ENCODE measurements at regions of chr4 and their contacts with region 1.

Region 1: DNA sequence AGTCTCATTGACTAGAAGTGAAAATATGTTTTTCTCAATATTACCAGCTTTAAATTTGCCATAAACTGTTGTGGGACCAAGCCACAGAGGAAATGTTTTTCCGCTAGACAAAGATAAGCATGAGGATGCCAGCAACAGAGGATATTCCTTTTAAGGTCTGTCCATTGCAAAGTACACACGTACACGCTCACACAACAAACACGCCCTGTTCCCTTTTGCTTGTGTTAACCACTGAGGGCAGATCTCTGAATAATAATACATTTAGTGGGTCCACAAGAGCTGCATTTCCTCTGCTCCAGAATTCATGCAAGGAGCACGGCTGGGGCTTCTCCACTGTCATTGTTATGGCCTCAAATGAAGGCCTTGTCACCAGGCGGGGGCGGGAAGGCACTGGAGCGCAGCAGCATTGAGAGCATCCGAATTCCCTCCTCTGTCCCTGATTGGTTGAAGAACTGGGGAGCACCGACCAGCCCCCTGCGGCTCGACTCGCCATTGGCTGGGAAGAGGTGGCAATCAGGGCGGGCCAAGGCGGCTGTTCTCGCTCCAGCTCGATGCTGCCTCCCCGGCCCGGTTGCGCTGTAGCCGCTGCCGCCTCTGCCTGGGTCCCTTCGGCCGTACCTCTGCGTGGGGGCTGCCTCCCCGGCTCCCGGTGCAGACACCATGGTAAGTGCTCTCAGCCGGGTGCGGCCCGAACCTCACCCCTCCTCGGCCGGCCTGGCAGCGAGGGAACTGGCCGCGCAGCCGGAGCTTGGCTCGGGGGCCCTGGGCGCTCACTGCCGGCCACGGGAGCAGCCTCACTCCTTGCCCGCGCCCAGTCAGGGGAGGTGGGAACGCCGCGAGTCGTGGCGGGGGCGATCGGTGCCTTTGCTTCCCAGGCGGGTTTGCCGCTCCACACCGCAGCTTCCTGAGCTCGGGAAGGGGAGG is at the start of gene GUCY1B1:
- DNase-seq: peak; percentile 98
- H3K4me3 ChIP-seq: peak within 1 kb of the TSS; percentile 64 to 67
- H3K27ac ChIP-seq: peak within 1 kb of the TSS in 1 of 2 experiments; percentile 72; a peak in 2 of 4 replicates
- H3K4me1 ChIP-seq: peaks cover 0 to 3% of the 10 kb centered on the region in 2 experiments; a peak in 1 of 4 replicates
- H3K27me3 ChIP-seq: no peaks in the 10 kb centered on the region
- CTCF ChIP-seq: peak; percentile 43
- EP300 ChIP-seq: no peak
- RAD21 ChIP-seq: peak; percentile 33
- polyA plus RNA-seq, gene GUCY1B1: 0.36 and 0.38 TPM in 2 replicates

Region 2: GRCh38 chr4:155769090-155769489 is 10.3 kb after region 1 on chr4:
- CTCF ChIA-PET with region 1: interaction called, 15 read pairs
- POLR2A ChIA-PET with region 1: no interaction called
- DNase-seq: no peak
- H3K4me3 ChIP-seq: no peak overlapping the region
- H3K27ac ChIP-seq: no peak overlapping the region
- H3K4me1 ChIP-seq: no peaks in the 10 kb centered on the region
- H3K27me3 ChIP-seq: no peaks in the 10 kb centered on the region
- CTCF ChIP-seq: no peak
- EP300 ChIP-seq: no peak
- RAD21 ChIP-seq: no peak

Region 3: GRCh38 chr4:155866177-155866576 is 107.4 kb after region 1 on chr4 and contains the start of gene ASIC5:
- CTCF ChIA-PET with region 1: no interaction called
- POLR2A ChIA-PET with region 1: no interaction called
- DNase-seq: no peak
- H3K4me3 ChIP-seq: no peak within 1 kb of the TSS; a peak in 1 of 4 replicates
- H3K27ac ChIP-seq: no peak within 1 kb of the TSS
- H3K4me1 ChIP-seq: no peaks in the 10 kb centered on the region
- H3K27me3 ChIP-seq: no peaks in the 10 kb centered on the region
- CTCF ChIP-seq: no peak
- EP300 ChIP-seq: no peak
- RAD21 ChIP-seq: no peak
- polyA plus RNA-seq, gene ASIC5: not detected in 2 replicates